GM10248 (cell line): ENCODE measurements at regions of chr7 and their contacts with region 1.

Region 1: DNA sequence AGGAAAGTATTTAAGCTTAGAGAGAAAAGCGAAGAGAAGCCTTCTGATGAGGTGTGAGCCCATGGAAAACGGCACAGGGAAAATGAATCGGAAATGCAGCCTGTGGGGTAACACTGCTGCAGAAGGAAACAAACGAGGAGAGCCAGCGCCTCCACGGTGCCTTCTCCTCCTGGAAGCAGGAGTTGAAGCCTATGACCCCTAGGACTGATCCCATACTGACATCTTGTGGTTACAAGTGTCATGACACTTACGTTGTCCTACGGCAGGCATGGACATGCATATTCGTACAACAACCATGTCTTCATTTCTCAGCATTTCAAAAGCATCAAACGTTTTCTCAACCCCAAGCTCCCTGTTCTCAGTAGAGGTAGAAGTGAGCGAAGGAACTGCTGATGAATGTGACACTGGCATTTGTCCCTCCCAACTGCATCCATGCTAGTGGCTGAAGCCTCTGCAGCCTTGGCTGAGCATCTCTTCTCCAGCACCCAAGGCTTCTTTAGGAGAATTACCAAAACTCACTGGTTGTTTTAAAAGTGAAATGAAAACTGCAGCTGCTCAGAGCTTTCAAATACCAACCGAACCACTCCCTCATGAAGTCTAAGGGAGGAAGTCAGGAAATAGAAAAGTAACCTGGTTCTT is 160.2 kb downstream of the JAZF1 start:
- DNase-seq: peak; percentile 71
- CTCF ChIP-seq: peak; percentile 88

Region 2: DNA sequence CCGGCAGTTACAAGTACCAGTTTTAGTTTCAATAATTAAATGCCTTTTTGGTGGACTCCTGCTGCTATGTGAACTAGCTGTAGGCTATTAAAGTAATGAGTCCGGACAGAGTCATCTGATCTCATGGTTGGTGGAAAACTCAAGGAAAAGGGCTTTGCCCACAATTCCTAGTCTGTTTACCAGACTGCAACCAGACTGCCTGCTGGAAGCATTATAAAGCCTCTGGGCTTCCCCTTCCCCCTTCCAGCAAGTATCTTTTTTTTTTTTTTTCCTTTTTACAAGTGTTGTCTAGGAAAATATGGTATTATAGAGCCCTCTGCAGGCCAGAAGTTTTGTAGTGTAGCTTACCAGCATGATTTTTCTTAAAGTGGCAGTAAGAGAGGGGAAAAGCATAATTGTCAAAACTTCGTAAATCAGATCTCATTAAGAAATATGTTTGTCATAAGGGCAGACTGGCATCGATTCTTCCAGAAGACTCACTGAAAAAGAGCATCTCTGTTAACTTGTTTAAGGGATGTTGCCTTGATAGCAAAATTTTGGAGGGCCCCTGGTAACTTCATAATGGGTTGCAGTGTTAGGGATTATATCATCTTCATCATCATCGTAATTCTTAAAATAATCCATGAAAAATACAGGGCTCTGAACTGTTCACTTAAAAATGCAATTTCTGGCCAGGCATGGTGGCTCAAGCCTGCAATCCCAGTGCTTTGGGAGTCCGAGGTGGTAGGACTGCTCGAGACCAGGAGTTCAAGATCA is 99.2 kb before region 1 on chr7:
- CTCF ChIA-PET with region 1: interaction called, 12 read pairs
- POLR2A ChIA-PET with region 1: no interaction called
- DNase-seq: peak; percentile 40
- CTCF ChIP-seq: peak; percentile 54

Region 3: DNA sequence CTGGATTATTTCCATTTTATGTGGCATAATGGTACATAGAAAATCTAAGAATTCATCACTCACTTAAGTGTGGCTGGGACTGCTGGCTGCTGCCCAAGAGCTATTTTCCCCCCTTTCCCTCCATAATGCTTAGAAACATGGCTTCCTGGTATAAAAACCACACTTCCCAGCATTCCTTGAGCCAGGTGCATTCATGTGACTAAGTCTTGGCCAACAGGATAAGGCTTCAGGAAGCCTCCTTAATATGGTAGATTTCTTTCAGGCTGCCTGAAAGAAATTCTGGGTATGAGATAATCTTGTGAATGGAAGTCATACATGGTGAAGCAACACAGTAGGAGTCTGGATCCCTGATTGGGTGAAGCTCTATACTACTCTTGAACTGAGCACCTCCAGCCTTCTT is 17.8 kb before region 1 on chr7:
- CTCF ChIA-PET with region 1: interaction called, 16 read pairs
- POLR2A ChIA-PET with region 1: no interaction called
- DNase-seq: no peak
- CTCF ChIP-seq: no peak

Region 4: GRCh38 chr7:28032738-28033380 is 12.4 kb after region 1 on chr7:
- CTCF ChIA-PET with region 1: interaction called, 12 read pairs
- POLR2A ChIA-PET with region 1: no interaction called
- DNase-seq: no peak
- CTCF ChIP-seq: no peak

Region 5: DNA sequence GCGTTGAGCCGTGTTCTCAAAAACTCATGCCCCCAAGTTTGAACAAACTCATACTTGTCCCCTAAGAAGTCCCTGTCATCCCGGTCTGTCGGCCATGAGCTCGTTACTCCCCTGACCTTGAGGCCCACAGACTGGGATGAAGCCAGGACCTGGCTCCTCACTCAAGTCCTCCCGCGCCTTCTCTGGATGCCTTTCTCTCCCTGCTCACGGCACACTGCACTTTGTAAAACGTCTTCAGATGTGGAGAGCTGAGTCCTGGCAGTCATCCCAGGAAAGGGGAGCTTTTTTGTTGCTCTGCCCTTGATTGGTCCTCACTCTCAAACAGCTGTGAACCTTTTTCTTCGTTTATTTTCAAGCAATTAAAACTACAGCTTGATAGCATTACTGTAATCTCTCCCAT is 49.4 kb after region 1 on chr7:
- CTCF ChIA-PET with region 1: no interaction called
- POLR2A ChIA-PET with region 1: no interaction called
- DNase-seq: no peak
- CTCF ChIP-seq: no peak